Natural killer cell (primary cell): ENCODE measurements at regions of chr5 and their contacts with region 1.

Region 1: DNA sequence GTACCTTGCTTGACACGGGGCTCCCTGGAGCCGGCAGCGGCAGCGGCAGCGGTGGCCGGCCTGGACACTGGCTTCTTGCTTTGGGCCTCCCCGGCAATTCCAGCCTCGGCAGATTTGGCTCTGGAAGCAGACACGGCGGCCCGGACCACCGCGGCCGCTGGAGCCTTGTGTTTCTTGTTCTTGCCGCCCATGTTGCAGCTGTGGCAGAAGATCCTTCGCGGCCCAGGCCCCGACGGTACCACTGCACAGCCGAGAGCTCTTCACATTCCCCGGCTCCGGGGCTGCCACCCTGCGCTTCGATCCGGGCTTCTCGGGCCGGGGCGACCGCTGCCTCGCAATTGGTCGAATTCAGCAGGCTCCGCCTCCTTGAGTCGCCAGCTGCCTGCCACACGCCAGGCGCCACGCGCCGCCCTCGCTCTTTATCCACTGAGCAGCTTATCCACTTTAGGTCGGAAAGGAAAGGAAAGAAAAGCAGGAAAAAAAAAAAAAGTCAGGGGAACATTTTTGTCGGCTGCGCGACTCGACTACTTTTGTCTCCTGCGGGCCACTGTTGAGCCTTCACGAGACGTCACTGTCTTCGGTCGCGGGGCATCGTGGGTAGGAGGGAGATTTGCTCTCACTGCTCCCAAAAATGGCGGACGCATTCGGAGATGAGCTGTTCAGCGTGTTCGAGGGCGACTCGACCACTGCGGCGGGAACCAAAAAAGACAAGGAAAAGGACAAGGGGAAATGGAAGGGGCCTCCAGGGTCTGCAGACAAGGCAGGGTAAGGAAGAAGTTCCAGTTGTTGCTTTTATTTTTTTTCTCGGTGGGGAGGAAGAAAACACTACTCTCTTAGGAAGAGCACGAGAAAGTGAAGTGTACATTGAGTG is at the starts of genes DHX29 and MTREX:
- DNase-seq: peak; percentile 90 to 93
- ATAC-seq: peak; percentile 91 to 95 (median 93)
- H3K4me3 ChIP-seq: peak within 1 kb of the TSS; percentile 64
- H3K4me3 Mint-ChIP-seq: no peak within 1 kb of the TSS
- H3K27ac ChIP-seq: peak within 1 kb of the TSS; percentile 93
- H3K27ac Mint-ChIP-seq: no peak within 1 kb of the TSS
- H3K4me1 ChIP-seq: peaks cover 17% of the 10 kb centered on the region
- H3K4me1 Mint-ChIP-seq: peaks cover 23 to 24% of the 10 kb centered on the region in 2 donors
- H3K27me3 ChIP-seq: no peaks in the 10 kb centered on the region
- H3K27me3 Mint-ChIP-seq: no peaks in the 10 kb centered on the region
- CTCF ChIP-seq: no peak
- total RNA-seq, gene DHX29: 16.7 to 22.0 (median 19.3) TPM
- total RNA-seq, gene MTREX: 64.5 to 82.2 (median 77.6) TPM

Region 2: GRCh38 chr5:54310433-54311175 is 997.0 kb before region 1 on chr5 and contains the start of gene ARL15:
- intact Hi-C with region 1: loop called (anchors 2 kb)
- DNase-seq: peak; percentile 96 to 98
- ATAC-seq: peak; percentile 93 to 98 (median 94)
- H3K4me3 ChIP-seq: peak within 1 kb of the TSS; percentile 79
- H3K4me3 Mint-ChIP-seq: peak within 1 kb of the TSS; percentile 98
- H3K27ac ChIP-seq: peak within 1 kb of the TSS; percentile 67
- H3K27ac Mint-ChIP-seq: peak within 1 kb of the TSS; percentile 90 to 98
- H3K4me1 ChIP-seq: peaks cover 14% of the 10 kb centered on the region
- H3K4me1 Mint-ChIP-seq: peaks cover 44 to 46% of the 10 kb centered on the region in 2 donors
- H3K27me3 ChIP-seq: no peaks in the 10 kb centered on the region
- H3K27me3 Mint-ChIP-seq: peaks cover 0 to 7% of the 10 kb centered on the region in 2 donors
- CTCF ChIP-seq: no peak
- total RNA-seq, gene ARL15: 28.9 to 35.1 (median 33.1) TPM

Region 3: DNA sequence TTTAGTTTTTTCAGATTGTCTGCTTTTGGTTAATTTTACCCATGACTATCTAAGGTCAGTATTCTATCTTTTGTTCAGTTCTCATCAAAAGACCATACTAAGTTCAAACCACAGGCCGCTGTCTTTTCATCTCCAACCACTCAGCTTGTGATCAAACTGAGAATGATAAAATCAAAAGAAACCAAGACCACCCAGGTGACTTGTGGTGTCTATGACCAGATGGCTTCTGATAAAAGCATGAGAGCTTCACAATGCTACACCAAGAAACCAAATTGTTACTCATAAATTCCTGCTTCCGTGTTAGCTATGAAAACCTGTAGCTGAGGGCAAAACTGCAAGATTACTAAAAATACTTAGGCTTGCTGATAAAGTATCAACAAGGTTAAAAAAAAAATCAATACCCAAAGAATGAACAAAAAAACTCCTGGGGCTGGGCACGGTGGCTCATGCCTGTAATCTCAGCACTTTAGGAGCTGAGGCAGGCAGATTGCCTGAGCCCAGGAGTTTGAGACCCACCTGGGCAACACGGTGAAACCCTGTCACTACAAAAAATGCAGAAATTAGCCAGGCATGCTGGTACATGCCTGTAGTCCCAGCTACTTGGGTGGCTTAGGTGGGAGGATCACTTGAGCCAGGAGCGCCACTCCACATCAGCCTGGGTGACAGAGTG is 173.4 kb before region 1 on chr5:
- intact Hi-C with region 1: no loop called
- DNase-seq: no peak
- ATAC-seq: peak in 1 of 3 donors; percentile 17
- H3K4me3 ChIP-seq: no peak overlapping the region
- H3K4me3 Mint-ChIP-seq: no peak overlapping the region
- H3K27ac ChIP-seq: no peak overlapping the region
- H3K27ac Mint-ChIP-seq: no peak overlapping the region
- H3K4me1 ChIP-seq: peaks cover 4% of the 10 kb centered on the region
- H3K4me1 Mint-ChIP-seq: peaks cover 9 to 10% of the 10 kb centered on the region in 2 donors
- H3K27me3 ChIP-seq: no peaks in the 10 kb centered on the region
- H3K27me3 Mint-ChIP-seq: no peaks in the 10 kb centered on the region
- CTCF ChIP-seq: no peak